ENCODE measurements at regions of chr17 and their contacts with region 1.

Region 1: GRCh38 chr17:42112552-42113176 is at the start of gene DHX58:
- DNase-seq: peak in 8 of 10 donors; percentile 27 to 83 (median 68)
- H3K4me3 ChIP-seq: peak within 1 kb of the TSS; percentile 47 to 85 (median 65)
- H3K27ac ChIP-seq: peak within 1 kb of the TSS; percentile 26 to 94 (median 85)
- H3K27me3 ChIP-seq: no peaks in the 10 kb centered on the region
- CTCF ChIP-seq: peak in 9 of 56 donors; percentile 9 to 30 (median 18)
- total RNA-seq, gene DHX58: 9.3 to 46.1 (median 17.9) TPM

Region 2: GRCh38 chr17:41966463-41967140 is 146.1 kb before region 1 on chr17 and contains the start of gene CNP:
- intact Hi-C with region 1: loop called (anchors 5 kb)
- DNase-seq: peak; percentile 87 to 93 (median 90)
- H3K4me3 ChIP-seq: peak within 1 kb of the TSS; percentile 58 to 99 (median 96)
- H3K27ac ChIP-seq: peak within 1 kb of the TSS; percentile 93 to 100 (median 98)
- H3K27me3 ChIP-seq: no peaks in the 10 kb centered on the region
- CTCF ChIP-seq: peak in 35 of 56 donors; percentile 1 to 56 (median 31)
- total RNA-seq, gene CNP: 166 to 3,303 (median 637) TPM

Region 3: DNA sequence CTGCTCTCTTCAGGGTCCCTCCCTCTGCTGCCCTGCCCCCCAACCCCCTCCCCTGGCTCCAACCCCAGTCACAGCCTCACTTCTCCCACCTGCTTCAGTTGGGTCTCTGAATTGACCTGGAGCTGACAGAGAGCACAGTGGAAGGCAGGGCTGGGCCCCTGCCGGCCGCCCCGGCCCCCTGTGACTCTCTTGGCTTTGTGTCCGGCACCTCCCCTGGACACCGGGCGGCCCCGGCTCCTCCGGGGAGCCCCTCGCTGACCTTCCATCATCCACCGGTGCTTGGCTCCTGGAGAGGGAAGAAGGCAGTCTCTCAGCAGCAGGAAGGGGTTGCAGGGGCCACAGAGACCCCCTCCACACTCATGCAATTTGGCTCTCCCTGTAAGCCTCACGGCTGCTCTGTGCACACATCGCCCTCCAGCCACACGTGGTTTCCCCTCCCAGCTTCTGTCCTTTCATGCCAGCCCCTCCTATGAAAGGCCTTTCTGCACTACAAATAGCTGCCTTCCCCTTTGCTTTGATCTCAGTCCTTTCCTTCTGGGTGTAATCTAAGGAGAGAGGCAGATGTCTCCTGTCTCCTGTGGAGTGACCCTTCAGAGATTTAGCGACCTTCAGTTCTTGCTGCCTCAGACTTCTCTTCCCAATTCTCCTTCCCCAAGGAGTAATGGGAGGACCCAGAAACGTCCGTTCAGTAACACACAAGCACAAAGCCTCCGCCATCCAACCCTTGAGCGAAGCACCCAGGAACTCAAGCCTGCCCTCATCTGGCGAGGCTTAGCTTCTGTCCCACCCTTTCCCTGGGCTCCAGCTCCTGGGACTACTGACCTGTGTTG is 84.5 kb before region 1 on chr17:
- intact Hi-C with region 1: loop called (anchors 1 to 2 kb)
- DNase-seq: no peak
- H3K4me3 ChIP-seq: no peak overlapping the region
- H3K27ac ChIP-seq: no peak overlapping the region
- H3K27me3 ChIP-seq: no peaks in the 10 kb centered on the region
- CTCF ChIP-seq: no peak

Region 4: DNA sequence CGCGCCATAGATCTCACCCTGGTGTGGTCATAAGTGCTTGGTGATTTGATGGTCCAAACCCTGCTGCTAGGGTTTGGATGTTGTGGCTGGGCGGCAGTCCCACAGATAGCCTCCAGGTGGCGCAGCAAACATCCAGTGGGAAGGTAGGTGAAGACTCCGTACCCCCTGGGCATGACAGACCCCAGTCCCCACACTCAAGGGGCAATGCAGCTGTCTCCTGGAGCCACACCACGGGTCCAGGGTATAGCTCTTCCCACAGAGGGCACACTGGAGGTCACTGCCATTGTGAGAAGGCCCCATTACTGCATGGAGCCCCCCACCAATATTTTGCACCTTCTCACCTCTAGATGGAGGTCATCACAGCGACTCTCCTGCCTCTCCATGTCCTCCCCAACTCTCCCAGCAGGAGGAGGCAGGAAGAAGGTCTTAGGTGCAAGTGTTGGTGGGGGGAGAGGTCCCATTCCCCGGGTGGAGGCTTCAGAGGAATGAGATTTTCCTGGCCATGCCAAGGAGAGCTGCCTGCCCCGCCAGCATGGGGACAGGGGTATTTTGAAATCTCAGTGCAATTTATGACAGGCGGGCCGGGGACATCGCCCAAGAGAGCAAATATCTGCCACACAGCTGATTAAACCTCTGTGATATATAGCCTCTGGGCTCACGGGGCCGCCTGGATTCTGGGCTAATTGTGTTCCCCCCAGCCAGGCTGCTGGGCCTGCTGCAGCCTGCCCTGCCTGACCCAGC is 45.1 kb before region 1 on chr17:
- intact Hi-C with region 1: loop called (anchors 2 to 5 kb)
- DNase-seq: peak in 9 of 10 donors; percentile 40 to 70 (median 57)
- H3K4me3 ChIP-seq: no peak overlapping the region
- H3K27ac ChIP-seq: no peak overlapping the region
- H3K27me3 ChIP-seq: peaks cover 0 to 41% (median 20%) of the 10 kb centered on the region in 45 donors
- CTCF ChIP-seq: peak; percentile 63 to 98 (median 89)

Region 5: GRCh38 chr17:42087736-42088705 is 24.6 kb before region 1 on chr17:
- intact Hi-C with region 1: loop called in 1 of 2 experiments (anchors 1 kb)
- DNase-seq: peak in 6 of 10 donors; percentile 31 to 59 (median 42)
- H3K4me3 ChIP-seq: peak overlapping the region in 3 of 59 donors; percentile 12 to 31 (median 28)
- H3K27ac ChIP-seq: no peak overlapping the region
- H3K27me3 ChIP-seq: peaks cover 0 to 8% (median 0%) of the 10 kb centered on the region in 45 donors
- CTCF ChIP-seq: no peak